Naive thymus-derived CD4-positive, alpha-beta T cell (primary cell): ENCODE measurements at regions of chr19 and their contacts with region 1.

Region 1: GRCh38 chr19:18636183-18636968 is 452 bp upstream of the KLHL26 start:
- DNase-seq: peak; percentile 97 to 100 (median 98)
- ATAC-seq: peak; percentile 95
- H3K4me3 ChIP-seq: peak overlapping the region; percentile 77
- H3K4me3 Mint-ChIP-seq: peak overlapping the region; percentile 71 to 100 (median 88)
- H3K27ac ChIP-seq: peak overlapping the region; percentile 88
- H3K27ac Mint-ChIP-seq: peak overlapping the region; percentile 70 to 96 (median 87)
- H3K4me1 ChIP-seq: peaks cover 6 to 19% of the 10 kb centered on the region in 2 donors
- H3K4me1 Mint-ChIP-seq: peaks cover 23 to 48% (median 36%) of the 10 kb centered on the region in 7 donors
- H3K27me3 ChIP-seq: no peaks in the 10 kb centered on the region
- H3K27me3 Mint-ChIP-seq: peaks cover 0 to 18% (median 3%) of the 10 kb centered on the region in 5 donors

Region 2: GRCh38 chr19:17966550-17967256 is 669.7 kb before region 1 on chr19 and contains the start of gene KCNN1:
- CTCF ChIA-PET with region 1: no interaction called
- POLR2A ChIA-PET with region 1: no interaction called
- intact Hi-C with region 1: no loop called
- DNase-seq: no peak
- ATAC-seq: no peak
- H3K4me3 ChIP-seq: no peak within 1 kb of the TSS
- H3K4me3 Mint-ChIP-seq: peak within 1 kb of the TSS in 9 of 10 donors; percentile 34 to 81 (median 67)
- H3K27ac ChIP-seq: no peak within 1 kb of the TSS
- H3K27ac Mint-ChIP-seq: peak within 1 kb of the TSS in 1 of 9 donors; percentile 43
- H3K4me1 ChIP-seq: peaks cover 0 to 5% of the 10 kb centered on the region in 2 donors
- H3K4me1 Mint-ChIP-seq: peaks cover 0 to 11% (median 8%) of the 10 kb centered on the region in 7 donors
- H3K27me3 ChIP-seq: peaks cover 0 to 13% of the 10 kb centered on the region in 2 donors
- H3K27me3 Mint-ChIP-seq: peaks cover 32 to 48% (median 38%) of the 10 kb centered on the region in 5 donors
- total RNA-seq, gene KCNN1: 0.05 TPM in 1 of 5 experiments, not detected in the others

Region 3: GRCh38 chr19:18436671-18437490 is 199.5 kb before region 1 on chr19:
- CTCF ChIA-PET with region 1: no interaction called
- POLR2A ChIA-PET with region 1: no interaction called
- intact Hi-C with region 1: loop called in 1 of 2 experiments (anchors 5 kb)
- DNase-seq: peak in 8 of 9 donors; percentile 60 to 79 (median 72)
- ATAC-seq: peak; percentile 68
- H3K4me3 ChIP-seq: peak overlapping the region; percentile 41
- H3K4me3 Mint-ChIP-seq: peak overlapping the region; percentile 73 to 89 (median 83)
- H3K27ac ChIP-seq: peak overlapping the region; percentile 69
- H3K27ac Mint-ChIP-seq: peak overlapping the region in 6 of 9 donors; percentile 22 to 71 (median 42)
- H3K4me1 ChIP-seq: peaks cover 5 to 16% of the 10 kb centered on the region in 2 donors
- H3K4me1 Mint-ChIP-seq: peaks cover 0 to 37% (median 27%) of the 10 kb centered on the region in 7 donors
- H3K27me3 ChIP-seq: no peaks in the 10 kb centered on the region
- H3K27me3 Mint-ChIP-seq: no peaks in the 10 kb centered on the region

Region 4: DNA sequence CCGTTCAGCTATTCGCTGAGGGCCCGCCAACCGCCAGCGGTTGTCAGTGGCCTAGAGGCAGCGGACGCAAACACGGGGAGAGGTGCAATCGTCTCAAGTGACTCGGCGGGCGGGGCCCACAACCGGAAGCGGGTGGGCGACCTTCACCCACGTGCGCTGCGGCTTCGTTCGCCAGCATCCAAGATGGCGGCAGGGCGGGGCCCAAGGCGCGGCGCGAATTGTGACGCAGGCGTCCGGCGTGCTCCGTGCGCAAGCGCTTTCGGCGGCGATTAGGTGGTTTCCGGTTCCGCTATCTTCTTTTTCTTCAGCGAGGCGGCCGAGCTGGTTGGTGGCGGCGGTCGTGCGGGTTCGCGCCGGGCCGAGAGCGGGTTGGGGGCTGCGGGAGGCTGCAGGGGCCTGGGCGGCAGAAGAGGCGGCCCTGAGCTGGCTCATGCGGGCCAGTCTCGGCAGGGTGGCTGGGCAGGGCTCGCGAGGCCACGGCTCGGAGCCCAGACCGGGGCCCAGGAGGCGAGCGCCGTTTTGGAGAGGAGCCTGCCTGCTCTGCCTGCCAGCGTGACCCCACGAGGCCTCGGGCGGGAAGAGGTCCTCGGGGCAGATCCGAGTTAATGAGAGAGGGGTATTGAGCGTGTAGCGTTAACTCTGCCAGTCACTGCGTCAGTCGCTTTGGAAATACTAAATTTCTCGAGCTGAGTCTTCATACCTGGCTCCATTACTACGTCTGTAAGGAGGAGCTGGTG is 64.6 kb before region 1 on chr19 and contains the start of gene UBA52:
- CTCF ChIA-PET with region 1: no interaction called
- POLR2A ChIA-PET with region 1: interaction called, 4 read pairs
- intact Hi-C with region 1: loop called (anchors 1 kb)
- DNase-seq: peak; percentile 97 to 99 (median 98)
- ATAC-seq: peak; percentile 97
- H3K4me3 ChIP-seq: peak within 1 kb of the TSS; percentile 91
- H3K4me3 Mint-ChIP-seq: peak within 1 kb of the TSS; percentile 83 to 97 (median 91)
- H3K27ac ChIP-seq: peak within 1 kb of the TSS; percentile 94
- H3K27ac Mint-ChIP-seq: peak within 1 kb of the TSS; percentile 92 to 99 (median 96)
- H3K4me1 ChIP-seq: peaks cover 17% of the 10 kb centered on the region in 2 donors
- H3K4me1 Mint-ChIP-seq: peaks cover 14 to 38% (median 26%) of the 10 kb centered on the region in 7 donors
- H3K27me3 ChIP-seq: no peaks in the 10 kb centered on the region
- H3K27me3 Mint-ChIP-seq: peaks cover 0 to 2% (median 0%) of the 10 kb centered on the region in 5 donors
- total RNA-seq, gene UBA52: 1,563 to 2,429 (median 2,196) TPM

Region 5: DNA sequence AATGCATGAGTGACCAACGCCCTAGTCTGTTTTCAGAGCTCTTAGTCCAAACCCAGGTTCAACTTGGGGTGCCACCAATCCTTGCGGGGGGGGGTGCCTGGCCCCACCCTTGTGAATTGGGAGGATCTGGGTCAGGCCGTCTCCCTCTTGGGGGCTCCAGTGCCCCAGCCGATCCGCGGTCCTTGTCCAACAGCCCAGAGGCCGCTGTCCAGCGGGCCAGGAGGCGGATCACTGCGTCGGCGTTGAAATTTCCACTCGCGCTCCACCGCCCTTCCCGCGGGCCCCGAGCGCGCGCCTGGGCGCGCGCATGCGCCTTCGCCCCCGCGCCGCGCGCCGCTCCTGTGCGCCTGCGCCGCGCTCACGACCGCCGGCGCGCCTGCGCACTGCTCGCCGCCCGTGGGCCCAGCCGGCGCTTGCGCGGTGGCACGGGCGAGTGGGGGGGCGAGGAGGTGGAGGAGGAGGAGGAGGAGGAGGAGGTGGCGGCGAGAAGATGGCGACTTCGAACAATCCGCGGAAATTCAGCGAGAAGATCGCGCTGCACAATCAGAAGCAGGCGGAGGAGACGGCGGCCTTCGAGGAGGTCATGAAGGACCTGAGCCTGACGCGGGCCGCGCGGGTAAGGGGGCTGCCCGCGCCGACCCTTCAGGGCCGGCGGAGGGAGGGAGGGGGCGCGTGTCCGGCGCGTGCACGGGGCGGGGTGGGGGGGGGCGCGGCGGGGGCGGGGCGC is 47.0 kb after region 1 on chr19 and contains the start of gene CRTC1:
- CTCF ChIA-PET with region 1: no interaction called
- POLR2A ChIA-PET with region 1: no interaction called
- intact Hi-C with region 1: loop called (anchors 1 kb)
- DNase-seq: peak; percentile 91 to 98 (median 96)
- ATAC-seq: peak; percentile 94
- H3K4me3 ChIP-seq: peak within 1 kb of the TSS; percentile 92
- H3K4me3 Mint-ChIP-seq: peak within 1 kb of the TSS; percentile 80 to 93 (median 87)
- H3K27ac ChIP-seq: peak within 1 kb of the TSS; percentile 78
- H3K27ac Mint-ChIP-seq: peak within 1 kb of the TSS; percentile 31 to 94 (median 90)
- H3K4me1 ChIP-seq: peaks cover 12 to 16% of the 10 kb centered on the region in 2 donors
- H3K4me1 Mint-ChIP-seq: peaks cover 6 to 45% (median 27%) of the 10 kb centered on the region in 7 donors
- H3K27me3 ChIP-seq: no peaks in the 10 kb centered on the region
- H3K27me3 Mint-ChIP-seq: peaks cover 0 to 3% (median 0%) of the 10 kb centered on the region in 5 donors
- total RNA-seq, gene CRTC1: 8.4 to 23.4 (median 22.3) TPM

Region 6: GRCh38 chr19:18831524-18832305 is 195.3 kb after region 1 on chr19 and contains the start of gene UPF1:
- CTCF ChIA-PET with region 1: no interaction called
- POLR2A ChIA-PET with region 1: interaction called, 3 read pairs
- intact Hi-C with region 1: loop called (anchors 1 kb)
- DNase-seq: peak; percentile 92 to 99 (median 96)
- ATAC-seq: peak; percentile 93
- H3K4me3 ChIP-seq: peak within 1 kb of the TSS; percentile 95
- H3K4me3 Mint-ChIP-seq: peak within 1 kb of the TSS; percentile 89 to 97 (median 92)
- H3K27ac ChIP-seq: peak within 1 kb of the TSS; percentile 90
- H3K27ac Mint-ChIP-seq: peak within 1 kb of the TSS; percentile 83 to 96 (median 90)
- H3K4me1 ChIP-seq: peaks cover 17 to 23% of the 10 kb centered on the region in 2 donors
- H3K4me1 Mint-ChIP-seq: peaks cover 36 to 42% (median 39%) of the 10 kb centered on the region in 7 donors
- H3K27me3 ChIP-seq: no peaks in the 10 kb centered on the region
- H3K27me3 Mint-ChIP-seq: peaks cover 0 to 18% (median 6%) of the 10 kb centered on the region in 5 donors
- total RNA-seq, gene UPF1: 98.7 to 148 (median 113) TPM

Region 7: GRCh38 chr19:19404879-19405860 is 768.8 kb after region 1 on chr19 and contains the start of gene GATAD2A:
- CTCF ChIA-PET with region 1: no interaction called
- POLR2A ChIA-PET with region 1: no interaction called
- intact Hi-C with region 1: loop called in 1 of 2 experiments (anchors 5 kb)
- DNase-seq: peak; percentile 85 to 99 (median 90)
- ATAC-seq: peak; percentile 96
- H3K4me3 ChIP-seq: peak within 1 kb of the TSS; percentile 65
- H3K4me3 Mint-ChIP-seq: peak within 1 kb of the TSS; percentile 89 to 97 (median 94)
- H3K27ac ChIP-seq: peak within 1 kb of the TSS; percentile 86
- H3K27ac Mint-ChIP-seq: peak within 1 kb of the TSS; percentile 86 to 98 (median 92)
- H3K4me1 ChIP-seq: peaks cover 26 to 38% of the 10 kb centered on the region in 2 donors
- H3K4me1 Mint-ChIP-seq: peaks cover 37 to 70% (median 66%) of the 10 kb centered on the region in 7 donors
- H3K27me3 ChIP-seq: no peaks in the 10 kb centered on the region
- H3K27me3 Mint-ChIP-seq: no peaks in the 10 kb centered on the region
- total RNA-seq, gene GATAD2A: 97.9 to 123 (median 116) TPM